HepG2 (cell line): ENCODE measurements at regions of chr1 and their contacts with region 1.

Region 1: GRCh38 chr1:153626922-153627796 is at the start of gene S100A13:
- DNase-seq: peak; percentile 90
- ATAC-seq: peak; percentile 82
- H3K4me3 ChIP-seq: peak within 1 kb of the TSS; percentile 72 to 84 (median 74)
- H3K27ac ChIP-seq: peak within 1 kb of the TSS; percentile 87
- H3K4me1 ChIP-seq: peaks cover 55% of the 10 kb centered on the region
- H3K27me3 ChIP-seq: no peaks in the 10 kb centered on the region
- CTCF ChIP-seq: peak; percentile 94
- EP300 ChIP-seq: no peak
- POLR2A ChIP-seq: peak; percentile 91 to 94
- RAD21 ChIP-seq: peak; percentile 68
- total RNA-seq, gene S100A13: 89.5 and 115 TPM in 2 replicates

Region 2: DNA sequence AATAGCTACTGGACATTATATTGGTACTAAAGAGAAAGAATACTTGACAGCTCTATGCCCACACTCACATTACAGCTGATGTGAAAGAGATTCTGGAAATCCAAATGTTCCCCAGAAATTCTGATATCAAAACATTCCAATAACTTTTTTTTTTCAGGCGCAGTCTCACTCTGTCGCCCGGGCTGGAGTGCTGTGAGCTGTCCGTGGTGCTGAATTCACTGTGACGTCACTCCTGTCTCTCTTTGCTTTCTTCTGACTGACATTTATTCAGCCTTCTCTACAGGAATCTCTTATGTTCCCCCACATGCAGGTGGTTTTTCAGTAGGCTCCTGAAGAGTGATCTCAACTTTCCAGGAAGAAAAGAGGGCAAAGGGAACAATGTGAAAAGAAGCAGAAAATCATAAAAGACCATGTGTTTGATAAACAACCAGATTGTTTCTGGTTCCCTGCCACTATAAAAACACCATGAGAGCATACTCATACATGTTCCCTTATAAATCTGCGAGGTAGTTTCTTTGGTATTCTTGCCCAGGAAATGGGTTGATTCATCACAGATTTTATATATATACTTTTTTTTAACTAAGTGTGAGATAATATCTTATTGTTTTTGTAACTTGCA is 204.6 kb before region 1 on chr1:
- CTCF ChIA-PET with region 1: no interaction called
- POLR2A ChIA-PET with region 1: no interaction called
- in situ Hi-C with region 1: no loop called
- intact Hi-C with region 1: no loop called
- DNase-seq: peak; percentile 34
- ATAC-seq: no peak
- H3K4me3 ChIP-seq: no peak overlapping the region
- H3K27ac ChIP-seq: no peak overlapping the region
- H3K4me1 ChIP-seq: no peaks in the 10 kb centered on the region
- H3K27me3 ChIP-seq: no peaks in the 10 kb centered on the region
- CTCF ChIP-seq: no peak
- EP300 ChIP-seq: no peak
- POLR2A ChIP-seq: no peak
- RAD21 ChIP-seq: no peak

Region 3: GRCh38 chr1:153510984-153511410 is 116.2 kb before region 1 on chr1:
- CTCF ChIA-PET with region 1: interaction called, 7 read pairs
- POLR2A ChIA-PET with region 1: interaction called, 6 read pairs
- in situ Hi-C with region 1: loop called (anchors 5 kb)
- intact Hi-C with region 1: loop called (anchors 5 kb)
- DNase-seq: peak; percentile 71
- ATAC-seq: peak; percentile 85
- H3K4me3 ChIP-seq: no peak overlapping the region
- H3K27ac ChIP-seq: no peak overlapping the region
- H3K4me1 ChIP-seq: peaks cover 35% of the 10 kb centered on the region
- H3K27me3 ChIP-seq: no peaks in the 10 kb centered on the region; a peak in 3 of 5 replicates
- CTCF ChIP-seq: peak; percentile 97
- EP300 ChIP-seq: no peak
- POLR2A ChIP-seq: no peak
- RAD21 ChIP-seq: peak; percentile 95

Region 4: DNA sequence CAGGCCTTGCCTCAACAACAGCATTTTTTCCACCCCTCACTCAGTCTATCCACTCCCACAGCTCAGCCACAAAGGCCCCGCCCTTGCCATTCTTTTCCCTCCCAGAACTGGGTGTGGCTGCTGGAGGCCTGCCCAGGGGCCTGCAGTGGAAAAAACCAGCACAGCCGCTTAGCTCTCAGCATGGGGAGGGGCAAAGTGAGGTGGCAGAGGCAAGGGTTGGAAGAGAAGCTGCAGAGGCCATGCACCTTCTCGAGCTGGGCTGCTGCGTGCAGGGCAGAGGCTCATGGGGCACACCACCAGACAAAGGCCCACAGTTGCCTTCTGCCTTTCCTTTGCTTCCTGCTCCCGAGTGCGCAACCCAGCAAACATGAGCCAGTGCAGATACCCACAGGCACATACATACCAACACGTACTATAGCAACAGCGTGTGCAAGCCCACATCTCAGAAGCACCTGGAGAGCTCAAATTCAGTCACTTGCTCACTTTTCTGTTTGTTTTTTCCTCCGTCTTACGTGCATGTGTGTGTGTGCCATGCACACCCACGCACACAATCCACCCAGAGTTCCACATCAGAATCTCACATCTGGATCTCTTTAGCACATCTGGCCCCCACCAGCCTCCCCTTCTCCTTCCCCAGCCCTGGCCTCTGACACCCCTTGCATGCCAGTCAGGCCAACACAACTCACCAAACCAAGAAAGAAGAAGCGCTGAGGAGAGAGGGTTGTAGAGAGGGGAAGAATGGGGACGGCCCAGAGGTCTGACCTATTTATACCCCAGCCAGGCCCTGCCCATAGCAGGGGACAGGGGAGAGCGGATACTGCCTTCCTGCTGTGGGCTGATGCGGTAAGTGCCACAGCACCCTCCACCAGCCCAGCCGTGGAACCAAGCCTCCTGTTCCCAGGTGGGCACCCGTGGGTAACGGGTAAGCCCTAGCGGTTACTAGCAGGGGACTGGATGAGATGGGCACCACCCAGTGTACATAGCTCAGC is 81.8 kb before region 1 on chr1 and contains the start of gene S100A4:
- CTCF ChIA-PET with region 1: no interaction called
- POLR2A ChIA-PET with region 1: interaction called, 13 read pairs
- in situ Hi-C with region 1: no loop called
- intact Hi-C with region 1: no loop called
- DNase-seq: peak; percentile 93
- ATAC-seq: peak; percentile 85
- H3K4me3 ChIP-seq: peak within 1 kb of the TSS in 2 of 3 experiments; percentile 32 to 62; a peak in 4 of 6 replicates
- H3K27ac ChIP-seq: peak within 1 kb of the TSS; percentile 39
- H3K4me1 ChIP-seq: peaks cover 98% of the 10 kb centered on the region
- H3K27me3 ChIP-seq: peaks cover 1 to 11% of the 10 kb centered on the region in 2 experiments; a peak in 3 of 5 replicates
- CTCF ChIP-seq: no peak
- EP300 ChIP-seq: peak in 1 of 2 experiments; percentile 87; a peak in 2 of 4 replicates
- POLR2A ChIP-seq: peak; percentile 51 to 82
- RAD21 ChIP-seq: no peak
- total RNA-seq, gene S100A4: 20.2 and 24.5 TPM in 2 replicates

Region 5: DNA sequence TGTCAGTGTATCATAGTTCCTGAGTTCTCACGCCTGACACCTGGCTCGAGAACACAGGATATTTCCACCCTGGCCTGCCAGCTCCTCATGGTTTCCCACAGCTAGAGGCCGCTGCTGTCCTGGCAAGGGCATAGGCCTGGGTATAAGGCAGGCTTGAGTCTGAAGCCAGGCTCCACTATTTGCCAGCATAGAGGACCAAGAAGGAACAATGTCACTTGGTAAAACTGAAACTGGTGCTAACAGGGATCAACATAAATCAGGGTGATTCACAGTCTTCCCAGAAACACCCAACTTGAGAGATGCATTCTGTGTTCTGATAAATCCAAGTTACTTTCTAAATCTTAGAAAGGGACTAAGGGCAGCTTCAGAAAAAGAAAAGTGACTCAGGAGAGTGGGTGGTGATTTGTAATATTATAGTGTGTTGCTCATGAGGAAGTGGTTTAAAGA is 54.6 kb before region 1 on chr1:
- CTCF ChIA-PET with region 1: interaction called, 18 read pairs
- POLR2A ChIA-PET with region 1: interaction called, 17 read pairs
- in situ Hi-C with region 1: loop called (anchors 5 kb)
- intact Hi-C with region 1: loop called (anchors 1 kb)
- DNase-seq: peak; percentile 72
- ATAC-seq: peak; percentile 87
- H3K4me3 ChIP-seq: no peak overlapping the region
- H3K27ac ChIP-seq: no peak overlapping the region
- H3K4me1 ChIP-seq: peaks cover 41% of the 10 kb centered on the region
- H3K27me3 ChIP-seq: no peaks in the 10 kb centered on the region; a peak in 1 of 5 replicates
- CTCF ChIP-seq: peak; percentile 92
- EP300 ChIP-seq: no peak
- POLR2A ChIP-seq: no peak
- RAD21 ChIP-seq: peak; percentile 81

Region 6: GRCh38 chr1:153608742-153609584 is 18.2 kb before region 1 on chr1:
- CTCF ChIA-PET with region 1: no interaction called
- POLR2A ChIA-PET with region 1: interaction called, 390 read pairs
- in situ Hi-C with region 1: no loop called
- intact Hi-C with region 1: loop called (anchors 2 kb)
- DNase-seq: peak; percentile 96
- ATAC-seq: peak; percentile 82
- H3K4me3 ChIP-seq: peak overlapping the region; percentile 62 to 83 (median 64)
- H3K27ac ChIP-seq: peak overlapping the region; percentile 99
- H3K4me1 ChIP-seq: peaks cover 61% of the 10 kb centered on the region
- H3K27me3 ChIP-seq: no peaks in the 10 kb centered on the region; a peak in 1 of 5 replicates
- CTCF ChIP-seq: no peak
- EP300 ChIP-seq: peak; percentile 14 to 55; a peak in 3 of 4 replicates
- POLR2A ChIP-seq: peak; percentile 82 to 91
- RAD21 ChIP-seq: 0 out of 2 replicates have a peak, but pooled peaks have one; percentile 11

Region 7: DNA sequence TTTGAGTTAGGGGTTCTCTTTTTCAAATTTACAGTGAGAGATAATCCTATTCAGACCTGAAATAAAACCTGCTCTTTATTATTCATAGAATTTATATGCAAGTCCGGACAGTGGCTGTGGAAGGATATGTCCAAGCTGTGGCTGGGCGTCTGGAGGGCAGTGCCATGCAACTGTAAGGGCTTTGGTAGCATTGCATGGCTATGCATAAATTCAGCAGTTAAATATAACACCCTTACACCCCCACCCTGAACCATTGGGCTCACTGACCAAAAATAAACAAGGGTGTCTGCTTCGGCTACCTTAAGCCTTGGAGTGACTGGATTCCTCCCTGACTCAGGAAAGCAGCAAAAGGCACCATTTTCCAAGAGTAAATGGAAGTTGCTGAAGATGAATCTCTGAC is 12.1 kb after region 1 on chr1:
- CTCF ChIA-PET with region 1: no interaction called
- POLR2A ChIA-PET with region 1: interaction called, 16 read pairs
- in situ Hi-C with region 1: no loop called
- intact Hi-C with region 1: no loop called
- DNase-seq: no peak
- ATAC-seq: no peak
- H3K4me3 ChIP-seq: no peak overlapping the region
- H3K27ac ChIP-seq: no peak overlapping the region
- H3K4me1 ChIP-seq: peaks cover 30% of the 10 kb centered on the region
- H3K27me3 ChIP-seq: no peaks in the 10 kb centered on the region
- CTCF ChIP-seq: no peak
- EP300 ChIP-seq: no peak
- POLR2A ChIP-seq: no peak
- RAD21 ChIP-seq: no peak

Region 8: GRCh38 chr1:153727463-153728304 is 100.5 kb after region 1 on chr1 and contains the start of gene INTS3:
- CTCF ChIA-PET with region 1: no interaction called
- POLR2A ChIA-PET with region 1: interaction called, 11 read pairs
- in situ Hi-C with region 1: no loop called
- intact Hi-C with region 1: no loop called
- DNase-seq: peak; percentile 99
- ATAC-seq: peak; percentile 99
- H3K4me3 ChIP-seq: peak within 1 kb of the TSS; percentile 89 to 95 (median 92)
- H3K27ac ChIP-seq: peak within 1 kb of the TSS; percentile 95
- H3K4me1 ChIP-seq: peaks cover 46% of the 10 kb centered on the region
- H3K27me3 ChIP-seq: no peaks in the 10 kb centered on the region; a peak in 1 of 5 replicates
- CTCF ChIP-seq: no peak
- EP300 ChIP-seq: no peak
- POLR2A ChIP-seq: peak; percentile 73 to 76
- RAD21 ChIP-seq: no peak
- total RNA-seq, gene INTS3: 14.7 and 17.2 TPM in 2 replicates